Activated CD4-positive, alpha-beta memory T cell treated with anti-CD3 and anti-CD28 coated beads for 36 hours (primary cell): ENCODE measurements at regions of chr9 and their contacts with region 1.

Region 1: GRCh38 chr9:98074115-98074990 is 17.8 kb downstream of the NANS start:
- DNase-seq: peak; percentile 79
- H3K4me3 Mint-ChIP-seq: no peak overlapping the region
- H3K27ac Mint-ChIP-seq: peak overlapping the region; percentile 93
- H3K4me1 Mint-ChIP-seq: peaks cover 41% of the 10 kb centered on the region
- H3K27me3 Mint-ChIP-seq: no peaks in the 10 kb centered on the region

Region 2: GRCh38 chr9:97982683-97983588 is 91.4 kb before region 1 on chr9 and contains the start of gene ANP32B:
- CTCF ChIA-PET with region 1: no interaction called
- POLR2A ChIA-PET with region 1: no interaction called
- intact Hi-C with region 1: loop called (anchors 1 kb)
- DNase-seq: peak; percentile 96
- H3K4me3 Mint-ChIP-seq: peak within 1 kb of the TSS; percentile 83
- H3K27ac Mint-ChIP-seq: peak within 1 kb of the TSS; percentile 93
- H3K4me1 Mint-ChIP-seq: peaks cover 37% of the 10 kb centered on the region
- H3K27me3 Mint-ChIP-seq: no peaks in the 10 kb centered on the region
- total RNA-seq, gene ANP32B: 352 to 358 TPM

Region 3: DNA sequence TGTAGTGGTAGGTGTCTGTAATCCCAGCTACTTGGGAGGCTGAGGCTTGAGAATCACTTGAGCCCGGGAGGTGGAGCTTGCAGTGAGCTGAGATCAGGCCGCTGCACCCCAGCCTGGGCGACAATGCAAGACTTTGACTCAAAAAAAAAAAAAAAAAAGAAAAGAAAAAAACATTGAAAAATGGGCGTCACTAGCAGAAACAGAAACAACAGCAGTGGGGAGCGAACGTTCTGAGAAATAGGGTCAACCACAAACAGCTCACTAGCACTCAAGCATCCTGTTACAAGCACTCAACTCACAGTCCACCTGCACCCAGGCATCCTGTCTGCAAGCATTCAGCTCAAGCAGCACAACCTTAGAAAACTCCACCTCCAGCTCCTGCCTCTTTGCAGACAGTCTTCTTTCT is 27.5 kb after region 1 on chr9:
- CTCF ChIA-PET with region 1: interaction called, 10 read pairs
- POLR2A ChIA-PET with region 1: no interaction called
- intact Hi-C with region 1: loop called (anchors 1 kb)
- DNase-seq: peak; percentile 89
- H3K4me3 Mint-ChIP-seq: peak overlapping the region; percentile 66
- H3K27ac Mint-ChIP-seq: peak overlapping the region; percentile 95
- H3K4me1 Mint-ChIP-seq: peaks cover 88% of the 10 kb centered on the region
- H3K27me3 Mint-ChIP-seq: no peaks in the 10 kb centered on the region

Region 4: DNA sequence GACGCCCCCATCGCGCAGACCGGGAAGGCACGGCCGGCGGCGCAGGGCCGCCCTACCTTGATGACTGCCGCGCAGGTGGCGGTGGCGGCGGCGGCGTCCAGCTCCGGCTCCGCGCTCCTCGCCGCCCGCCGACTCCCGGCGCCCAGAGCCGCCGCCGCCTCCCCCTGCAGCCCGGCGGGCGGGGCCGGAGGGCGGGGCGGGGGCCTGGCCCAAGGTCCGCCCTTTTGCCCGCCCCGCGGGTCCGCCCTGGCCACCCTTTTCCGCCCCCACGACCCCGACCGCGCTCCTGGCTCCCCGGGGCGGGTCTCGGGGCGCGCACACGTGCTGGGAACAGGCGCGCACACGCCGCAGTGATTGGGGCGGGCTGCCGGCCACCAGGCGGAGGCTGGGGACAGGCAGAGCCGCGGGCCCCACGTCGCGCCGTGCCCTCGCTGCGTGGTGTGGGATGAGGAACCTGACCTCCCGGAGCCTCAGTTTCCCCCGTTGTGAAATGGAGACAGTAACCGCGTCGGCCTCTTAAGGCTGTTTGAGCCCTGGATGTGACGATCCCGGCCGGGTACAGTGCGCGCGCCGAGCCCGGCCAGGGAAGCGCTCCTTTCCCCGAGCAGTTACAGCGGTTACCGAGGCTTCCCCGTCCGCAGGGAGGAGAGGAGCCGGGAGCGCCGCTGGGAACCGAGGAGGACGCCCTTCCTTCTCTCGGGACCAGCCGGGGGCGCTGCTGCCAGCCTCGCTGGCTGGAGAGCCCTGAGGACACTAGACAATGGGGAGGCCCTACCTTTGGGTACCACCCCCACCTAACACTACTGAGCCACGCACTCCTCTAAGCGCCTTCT is 118.4 kb after region 1 on chr9 and contains the start of gene CORO2A:
- CTCF ChIA-PET with region 1: interaction called, 4 read pairs
- POLR2A ChIA-PET with region 1: no interaction called
- intact Hi-C with region 1: loop called (anchors 1 kb)
- DNase-seq: peak; percentile 79
- H3K4me3 Mint-ChIP-seq: peak within 1 kb of the TSS; percentile 86
- H3K27ac Mint-ChIP-seq: peak within 1 kb of the TSS; percentile 49
- H3K4me1 Mint-ChIP-seq: peaks cover 21% of the 10 kb centered on the region
- H3K27me3 Mint-ChIP-seq: no peaks in the 10 kb centered on the region
- total RNA-seq, gene CORO2A: 9.8 to 9.9 TPM

Region 5: GRCh38 chr9:98255578-98256296 is 181.4 kb after region 1 on chr9 and contains the start of gene TBC1D2:
- CTCF ChIA-PET with region 1: interaction called, 32 read pairs
- POLR2A ChIA-PET with region 1: no interaction called
- intact Hi-C with region 1: loop called (anchors 2 kb)
- DNase-seq: peak; percentile 98
- H3K4me3 Mint-ChIP-seq: peak within 1 kb of the TSS; percentile 85
- H3K27ac Mint-ChIP-seq: peak within 1 kb of the TSS; percentile 95
- H3K4me1 Mint-ChIP-seq: peaks cover 32% of the 10 kb centered on the region
- H3K27me3 Mint-ChIP-seq: no peaks in the 10 kb centered on the region
- total RNA-seq, gene TBC1D2: 5.2 to 5.3 TPM

Region 6: GRCh38 chr9:98796364-98797101 is 722.2 kb after region 1 on chr9 and contains the start of gene ANKS6:
- CTCF ChIA-PET with region 1: no interaction called
- POLR2A ChIA-PET with region 1: no interaction called
- intact Hi-C with region 1: loop called (anchors 10 kb)
- DNase-seq: peak; percentile 84
- H3K4me3 Mint-ChIP-seq: peak within 1 kb of the TSS; percentile 76
- H3K27ac Mint-ChIP-seq: peak within 1 kb of the TSS; percentile 54
- H3K4me1 Mint-ChIP-seq: peaks cover 27% of the 10 kb centered on the region
- H3K27me3 Mint-ChIP-seq: no peaks in the 10 kb centered on the region
- total RNA-seq, gene ANKS6: 13.0 to 16.0 TPM